HAP-1 (cell line): ENCODE measurements at regions of chr12 and their contacts with region 1.

Region 1: DNA sequence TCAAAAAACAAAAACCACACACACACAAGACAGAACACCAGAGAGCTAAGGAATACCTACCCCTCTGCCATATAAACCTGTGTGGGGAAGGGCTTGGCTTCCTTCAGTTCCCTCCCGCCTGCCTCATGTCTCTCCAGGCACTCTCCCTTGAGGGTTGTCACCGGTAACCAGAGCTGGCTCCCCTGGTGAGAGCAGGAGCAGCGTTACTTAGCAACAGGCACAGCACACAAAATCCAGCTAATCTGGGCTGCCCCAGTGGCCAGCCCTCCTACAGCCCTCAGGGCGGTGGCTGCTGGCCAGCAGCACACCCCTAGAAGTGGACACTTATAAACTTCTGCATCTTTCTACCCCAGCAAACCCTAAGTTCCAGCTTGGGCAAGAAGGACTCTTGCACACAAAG is 21.6 kb upstream of the NR4A1 start:
- DNase-seq: peak; percentile 60 to 78
- H3K4me3 ChIP-seq: no peak overlapping the region
- H3K4me1 ChIP-seq: peaks cover 25% of the 10 kb centered on the region
- H3K27me3 ChIP-seq: no peaks in the 10 kb centered on the region

Region 2: DNA sequence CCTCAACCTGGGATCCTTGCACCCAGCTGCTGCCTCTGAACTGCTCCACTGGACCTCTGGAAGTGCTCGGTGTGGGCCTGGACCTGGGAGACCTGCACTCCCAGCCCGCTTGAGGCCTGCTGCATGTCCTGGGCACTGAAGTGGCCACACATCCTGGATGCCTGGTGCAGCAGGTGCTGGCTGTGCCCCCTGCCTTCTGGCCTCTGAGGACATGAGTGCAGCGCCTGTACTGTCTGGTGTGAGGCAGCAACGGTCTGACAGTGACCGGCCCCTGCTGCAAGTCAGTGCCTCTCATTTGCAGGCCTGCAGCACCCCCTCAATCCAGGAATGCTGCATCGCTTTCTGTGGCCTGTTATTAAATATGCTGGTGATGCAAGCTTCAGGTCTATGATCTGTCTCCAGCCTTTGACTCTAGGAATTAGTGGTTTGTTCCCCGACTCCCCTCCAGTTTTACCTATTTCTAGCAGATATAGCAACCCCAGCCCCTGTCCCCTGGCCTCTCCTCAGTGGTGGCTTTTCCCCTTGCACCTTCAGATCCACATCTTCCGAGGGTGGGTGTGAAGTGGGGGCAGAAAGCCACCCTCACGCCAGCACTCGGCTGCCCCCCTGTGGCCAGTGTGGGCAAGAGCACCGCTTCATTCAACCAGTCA is 53.4 kb after region 1 on chr12:
- in situ Hi-C with region 1: loop called (anchors 5 kb)
- DNase-seq: peak; percentile 34 to 83
- H3K4me3 ChIP-seq: no peak overlapping the region
- H3K4me1 ChIP-seq: no peaks in the 10 kb centered on the region
- H3K27me3 ChIP-seq: peaks cover 17% of the 10 kb centered on the region

Region 3: DNA sequence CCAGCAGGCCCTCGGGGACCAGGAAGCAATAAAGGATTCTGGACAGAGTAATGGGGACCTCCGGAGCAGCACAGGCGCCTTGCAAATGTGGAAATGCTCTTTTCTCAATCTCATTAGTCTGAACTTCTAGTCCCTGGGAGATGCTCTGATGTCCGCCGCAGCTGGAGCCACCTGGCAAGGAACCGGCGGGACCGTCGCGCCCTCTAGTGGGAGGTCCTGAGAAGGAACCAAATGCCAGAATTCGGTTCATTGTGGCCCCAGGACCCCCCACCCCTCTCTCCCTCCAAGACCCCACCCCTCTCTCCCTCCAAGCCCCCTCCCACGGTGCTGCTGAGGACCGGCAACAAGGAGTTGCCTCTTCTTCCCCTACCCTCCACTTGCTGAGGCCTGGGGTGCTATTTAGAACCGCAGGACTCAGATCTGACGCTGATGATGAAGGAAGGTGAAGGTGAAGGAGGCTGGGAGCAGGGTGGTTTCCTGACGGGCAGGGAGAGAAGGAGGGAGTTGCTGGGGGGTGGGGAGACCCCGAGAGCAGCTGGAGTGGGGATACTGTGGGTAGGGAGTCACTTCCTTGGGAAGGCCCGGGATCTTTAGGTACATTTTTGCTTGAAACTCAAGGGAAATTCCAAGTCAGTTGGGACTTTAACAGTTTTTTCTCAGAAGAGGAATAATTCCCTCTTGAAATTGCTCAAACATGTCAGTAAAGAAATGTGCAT is 92.3 kb after region 1 on chr12:
- in situ Hi-C with region 1: loop called (anchors 5 kb)
- DNase-seq: peak; percentile 83 to 88
- H3K4me3 ChIP-seq: no peak overlapping the region
- H3K4me1 ChIP-seq: peaks cover 20% of the 10 kb centered on the region
- H3K27me3 ChIP-seq: no peaks in the 10 kb centered on the region